ENCODE measurements at regions of chr12 and their contacts with region 1.

Region 1: DNA sequence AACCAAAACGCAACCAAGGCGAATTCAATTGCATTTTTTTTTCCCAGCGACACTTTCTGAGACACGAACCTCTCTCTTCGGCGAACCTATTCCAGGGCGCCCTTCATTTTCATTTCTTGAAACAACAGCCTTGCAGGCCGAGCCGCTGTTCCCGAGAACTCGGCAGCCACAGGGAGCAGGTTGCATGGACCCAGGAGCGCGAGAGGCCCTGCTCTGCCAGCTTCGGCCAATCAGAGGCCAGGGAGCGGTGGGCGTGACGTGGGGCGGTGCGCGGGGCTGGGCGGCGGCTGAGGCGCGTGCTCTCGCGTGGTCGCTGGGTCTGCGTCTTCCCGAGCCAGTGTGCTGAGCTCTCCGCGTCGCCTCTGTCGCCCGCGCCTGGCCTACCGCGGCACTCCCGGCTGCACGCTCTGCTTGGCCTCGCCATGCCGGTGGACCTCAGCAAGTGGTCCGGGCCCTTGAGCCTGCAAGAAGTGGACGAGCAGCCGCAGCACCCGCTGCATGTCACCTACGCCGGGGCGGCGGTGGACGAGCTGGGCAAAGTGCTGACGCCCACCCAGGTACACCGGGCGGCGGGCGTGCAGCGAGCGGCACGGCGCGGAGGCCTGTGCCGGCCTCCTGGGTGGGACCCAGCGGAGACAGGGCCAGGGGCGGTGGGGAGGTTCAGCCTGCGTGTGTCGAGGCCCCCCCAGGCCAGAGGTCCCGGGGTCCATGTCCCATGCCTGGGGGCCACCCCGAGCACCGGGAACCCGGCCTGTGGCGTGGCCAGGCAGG is at the start of gene PEBP1:
- DNase-seq: peak; percentile 94 to 95
- ATAC-seq: peak; percentile 81 to 91
- H3K4me3 ChIP-seq: peak within 1 kb of the TSS; percentile 75 to 94 (median 92)
- H3K27ac ChIP-seq: peak within 1 kb of the TSS; percentile 91 to 97 (median 96)
- H3K4me1 ChIP-seq: peaks cover 14 to 37% of the 10 kb centered on the region in 2 donors
- H3K27me3 ChIP-seq: no peaks in the 10 kb centered on the region
- CTCF ChIP-seq: peak in 1 of 5 experiments; percentile 27
- POLR2A ChIP-seq: peak; percentile 92 to 93
- total RNA-seq, gene PEBP1: 306 to 442 (median 330) TPM

Region 2: GRCh38 chr12:118061011-118061875 is 74.7 kb before region 1 on chr12 and contains the start of gene WSB2:
- in situ Hi-C with region 1: no loop called
- intact Hi-C with region 1: loop called (anchors 2 kb)
- DNase-seq: peak; percentile 58 to 67
- ATAC-seq: peak; percentile 65 to 66
- H3K4me3 ChIP-seq: peak within 1 kb of the TSS; percentile 82 to 94 (median 87)
- H3K27ac ChIP-seq: peak within 1 kb of the TSS; percentile 92 to 96 (median 96)
- H3K4me1 ChIP-seq: peaks cover 23 to 30% of the 10 kb centered on the region in 2 donors
- H3K27me3 ChIP-seq: no peaks in the 10 kb centered on the region
- CTCF ChIP-seq: no peak
- POLR2A ChIP-seq: peak; percentile 30 to 45
- total RNA-seq, gene WSB2: 83.5 to 133 (median 93.5) TPM

Region 3: DNA sequence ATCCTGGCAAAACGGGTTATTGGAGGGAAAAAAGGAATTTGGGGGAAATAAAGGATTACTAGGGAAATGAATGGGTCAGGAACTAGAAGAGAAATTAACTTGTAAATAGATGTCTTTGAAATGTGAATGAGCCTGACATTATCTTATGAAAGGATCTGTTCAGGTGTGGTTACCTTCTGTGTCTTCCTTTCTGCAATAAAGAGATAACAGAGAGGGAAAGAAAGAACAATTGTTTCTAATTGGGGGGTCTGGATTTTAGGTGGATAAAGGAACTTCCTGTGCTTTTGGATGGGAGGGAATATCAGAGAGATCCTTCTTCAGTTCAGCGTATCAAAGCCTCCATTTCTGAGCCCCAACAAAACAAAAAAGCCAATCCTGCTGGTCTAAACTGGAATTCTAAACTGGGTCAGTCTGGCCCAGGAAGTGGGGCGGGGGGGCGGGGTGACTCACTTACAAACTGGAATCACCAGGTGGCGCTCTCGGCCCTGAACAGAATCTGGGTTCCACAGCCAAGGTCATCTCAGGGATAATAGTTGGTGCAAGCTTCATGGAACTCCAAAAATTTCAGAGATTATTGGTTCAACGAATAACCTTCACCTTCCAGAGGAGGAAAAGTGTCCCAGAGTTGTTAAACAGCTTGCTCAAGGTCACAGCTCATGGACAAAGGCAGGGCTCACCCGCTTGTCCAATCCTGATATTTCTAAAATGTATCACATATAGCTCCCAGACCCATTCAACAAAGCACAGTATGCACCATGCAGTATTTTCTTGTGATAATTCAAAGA is 15.2 kb before region 1 on chr12:
- in situ Hi-C with region 1: no loop called
- intact Hi-C with region 1: loop called (anchors 2 kb)
- DNase-seq: peak; percentile 48 to 67
- ATAC-seq: peak; percentile 77 to 91
- H3K4me3 ChIP-seq: no peak overlapping the region
- H3K27ac ChIP-seq: peak overlapping the region; percentile 16 to 54 (median 38)
- H3K4me1 ChIP-seq: peaks cover 0 to 9% of the 10 kb centered on the region in 2 donors
- H3K27me3 ChIP-seq: no peaks in the 10 kb centered on the region
- CTCF ChIP-seq: peak; percentile 38 to 83 (median 45)
- POLR2A ChIP-seq: no peak

Region 4: GRCh38 chr12:118183705-118184104 is 47.7 kb after region 1 on chr12:
- in situ Hi-C with region 1: no loop called
- intact Hi-C with region 1: loop called (anchors 5 kb)
- DNase-seq: no peak
- ATAC-seq: no peak
- H3K4me3 ChIP-seq: no peak overlapping the region
- H3K27ac ChIP-seq: peak overlapping the region; percentile 1 to 64 (median 41)
- H3K4me1 ChIP-seq: peaks cover 18 to 32% of the 10 kb centered on the region in 2 donors
- H3K27me3 ChIP-seq: no peaks in the 10 kb centered on the region
- CTCF ChIP-seq: no peak
- POLR2A ChIP-seq: no peak

Measured in gastrocnemius medialis (tissue), 4 donors.